Natural killer cell (primary cell): ENCODE measurements at regions of chr21 and their contacts with region 1.

Region 1: DNA sequence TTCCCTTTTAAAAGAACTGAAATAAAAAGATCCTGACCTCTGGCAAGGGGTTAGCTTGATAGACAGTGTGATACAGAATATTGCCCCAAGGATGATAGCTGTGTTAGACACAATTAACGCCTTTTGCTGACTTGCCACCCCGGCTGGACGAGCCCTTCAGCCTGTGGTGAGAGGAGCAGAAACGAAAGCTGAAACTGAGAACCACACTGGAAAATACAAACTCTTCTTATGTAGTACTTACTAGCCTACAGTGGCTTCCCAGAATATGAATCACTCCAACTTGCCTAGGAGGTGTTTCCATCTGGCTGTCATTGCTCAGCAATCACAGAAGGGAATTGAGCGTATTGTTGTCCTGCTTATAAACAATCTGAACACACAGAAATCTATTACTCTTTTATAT is 22.9 kb downstream of the SAMSN1 start:
- DNase-seq: peak; percentile 33 to 50
- ATAC-seq: peak; percentile 87 to 95 (median 89)
- H3K4me3 ChIP-seq: peak overlapping the region; percentile 12
- H3K4me3 Mint-ChIP-seq: peak overlapping the region; percentile 52
- H3K27ac ChIP-seq: peak overlapping the region; percentile 66
- H3K27ac Mint-ChIP-seq: peak overlapping the region; percentile 87 to 89
- H3K4me1 ChIP-seq: peaks cover 15% of the 10 kb centered on the region
- H3K4me1 Mint-ChIP-seq: peaks cover 28 to 41% of the 10 kb centered on the region in 2 donors
- H3K27me3 ChIP-seq: no peaks in the 10 kb centered on the region
- H3K27me3 Mint-ChIP-seq: no peaks in the 10 kb centered on the region
- CTCF ChIP-seq: no peak

Region 2: GRCh38 chr21:14533504-14534428 is 10.5 kb after region 1 on chr21:
- intact Hi-C with region 1: loop called (anchors 1 kb)
- DNase-seq: peak in 1 of 2 donors; percentile 84
- ATAC-seq: peak; percentile 83 to 87 (median 85)
- H3K4me3 ChIP-seq: peak overlapping the region; percentile 19
- H3K4me3 Mint-ChIP-seq: peak overlapping the region; percentile 82
- H3K27ac ChIP-seq: peak overlapping the region; percentile 93
- H3K27ac Mint-ChIP-seq: peak overlapping the region; percentile 93 to 95
- H3K4me1 ChIP-seq: peaks cover 8% of the 10 kb centered on the region
- H3K4me1 Mint-ChIP-seq: peaks cover 37 to 60% of the 10 kb centered on the region in 2 donors
- H3K27me3 ChIP-seq: no peaks in the 10 kb centered on the region
- H3K27me3 Mint-ChIP-seq: no peaks in the 10 kb centered on the region
- CTCF ChIP-seq: no peak

Region 3: DNA sequence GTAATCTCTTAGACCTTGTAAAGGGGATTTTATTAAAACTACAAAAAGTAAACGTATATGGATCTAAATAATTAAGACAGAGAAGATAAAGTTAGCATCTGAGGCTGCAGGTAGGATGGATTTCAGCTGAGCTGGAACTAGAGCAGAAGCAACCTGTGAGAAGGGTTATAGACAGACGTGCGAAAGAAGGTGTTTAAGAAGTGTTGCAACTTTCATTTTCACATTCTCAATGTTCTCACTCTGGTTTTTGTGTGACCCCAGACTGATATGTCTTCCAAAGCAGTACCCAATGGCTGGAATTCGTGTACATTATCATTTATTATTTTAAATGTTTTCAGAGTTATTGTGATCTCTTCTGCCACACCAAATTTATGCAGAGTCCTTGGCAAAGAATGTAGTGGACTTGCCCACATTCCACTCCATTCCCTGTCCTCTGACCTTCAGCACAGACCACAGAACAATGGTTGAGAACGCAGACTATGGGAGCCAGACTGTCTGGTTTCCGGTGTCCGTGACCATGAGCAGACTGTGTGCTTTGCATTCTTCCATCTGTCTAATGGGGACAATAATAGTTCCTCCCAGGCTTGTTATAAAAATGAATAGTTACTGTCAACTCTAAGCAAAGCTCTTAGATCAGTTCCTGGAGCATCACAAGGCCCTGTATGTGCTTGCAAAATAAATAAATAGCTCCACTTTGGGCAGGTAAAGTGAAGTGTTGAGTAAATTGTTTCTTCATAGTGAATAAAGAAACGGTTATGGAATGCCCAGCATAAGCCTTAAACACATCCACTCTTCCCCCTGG is 163.4 kb after region 1 on chr21:
- intact Hi-C with region 1: loop called (anchors 10 kb)
- DNase-seq: peak in 1 of 2 donors; percentile 38
- ATAC-seq: peak; percentile 76 to 89 (median 84)
- H3K4me3 ChIP-seq: no peak overlapping the region
- H3K4me3 Mint-ChIP-seq: no peak overlapping the region
- H3K27ac ChIP-seq: peak overlapping the region; percentile 7
- H3K27ac Mint-ChIP-seq: no peak overlapping the region
- H3K4me1 ChIP-seq: peaks cover 9% of the 10 kb centered on the region
- H3K4me1 Mint-ChIP-seq: peaks cover 15 to 19% of the 10 kb centered on the region in 2 donors
- H3K27me3 ChIP-seq: no peaks in the 10 kb centered on the region
- H3K27me3 Mint-ChIP-seq: peaks cover 0 to 10% of the 10 kb centered on the region in 2 donors
- CTCF ChIP-seq: no peak